CD8-positive, alpha-beta T cell (primary cell): ENCODE measurements at regions of chr13 and their contacts with region 1.

Region 1: GRCh38 chr13:42969558-42970172 is 22.4 kb downstream of the EPSTI1 start:
- DNase-seq: peak; percentile 65 to 90 (median 82)
- ATAC-seq: peak; percentile 92
- H3K4me3 ChIP-seq: no peak overlapping the region
- H3K4me3 Mint-ChIP-seq: no peak overlapping the region
- H3K27ac ChIP-seq: no peak overlapping the region
- H3K27ac Mint-ChIP-seq: peak overlapping the region; percentile 28
- H3K4me1 ChIP-seq: peaks cover 5% of the 10 kb centered on the region
- H3K4me1 Mint-ChIP-seq: peaks cover 17% of the 10 kb centered on the region
- H3K27me3 ChIP-seq: no peaks in the 10 kb centered on the region
- H3K27me3 Mint-ChIP-seq: no peaks in the 10 kb centered on the region
- CTCF ChIP-seq: peak; percentile 90

Region 2: DNA sequence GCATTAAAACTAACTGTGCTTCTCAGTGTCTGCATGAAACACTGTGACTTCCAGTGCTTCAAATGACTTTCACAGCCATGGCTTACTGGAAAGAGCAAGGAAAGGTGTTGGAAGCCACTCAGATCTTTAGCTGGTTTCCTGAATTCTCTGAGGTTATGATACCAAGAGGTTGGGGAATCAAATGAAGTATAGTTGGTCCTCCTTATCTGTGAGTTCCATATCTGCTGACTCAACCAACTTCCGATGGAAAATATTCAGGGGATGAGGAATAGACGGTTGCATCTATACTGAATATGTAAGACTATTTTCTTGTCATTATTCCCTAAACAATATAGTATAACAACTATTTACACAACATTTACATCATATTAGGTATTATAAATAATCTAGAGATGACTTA is 10.1 kb before region 1 on chr13:
- CTCF ChIA-PET with region 1: interaction called, 22 read pairs
- POLR2A ChIA-PET with region 1: no interaction called
- intact Hi-C with region 1: no loop called
- DNase-seq: no peak
- ATAC-seq: no peak
- H3K4me3 ChIP-seq: no peak overlapping the region
- H3K4me3 Mint-ChIP-seq: no peak overlapping the region
- H3K27ac ChIP-seq: no peak overlapping the region
- H3K27ac Mint-ChIP-seq: no peak overlapping the region
- H3K4me1 ChIP-seq: no peaks in the 10 kb centered on the region
- H3K4me1 Mint-ChIP-seq: no peaks in the 10 kb centered on the region
- H3K27me3 ChIP-seq: no peaks in the 10 kb centered on the region
- H3K27me3 Mint-ChIP-seq: no peaks in the 10 kb centered on the region
- CTCF ChIP-seq: no peak

Region 3: DNA sequence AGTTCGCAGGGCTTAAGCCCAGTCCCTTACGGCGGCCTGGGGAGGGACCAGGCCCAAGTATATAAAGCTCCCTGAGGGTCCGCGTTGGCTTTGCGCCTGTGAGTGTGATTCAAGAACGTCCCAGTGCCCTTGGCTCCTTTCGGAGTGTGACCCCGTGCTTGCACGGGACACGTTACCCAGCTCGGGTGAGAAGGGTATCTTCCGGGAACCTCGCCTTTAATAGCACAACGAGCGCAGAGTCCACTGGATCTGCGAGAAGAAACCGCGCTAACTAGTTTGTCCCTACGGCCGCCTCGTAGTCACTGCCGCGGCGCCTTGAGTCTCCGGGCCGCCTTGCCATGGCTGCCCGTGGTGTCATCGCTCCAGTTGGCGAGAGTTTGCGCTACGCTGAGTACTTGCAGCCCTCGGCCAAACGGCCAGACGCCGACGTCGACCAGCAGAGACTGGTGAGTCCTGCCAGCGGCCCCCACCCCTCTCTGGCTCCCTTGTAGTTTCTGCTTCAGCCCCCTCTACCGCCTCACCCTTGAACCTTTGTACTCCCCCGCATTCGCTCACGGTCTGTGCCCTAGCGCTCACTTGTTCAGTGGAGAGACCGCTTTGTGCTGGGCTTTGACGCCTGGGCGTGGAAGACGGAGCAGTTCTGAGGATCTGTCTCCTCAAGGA is 53.8 kb after region 1 on chr13 and contains the start of gene DNAJC15:
- CTCF ChIA-PET with region 1: interaction called, 8 read pairs
- POLR2A ChIA-PET with region 1: no interaction called
- intact Hi-C with region 1: loop called (anchors 1 kb)
- DNase-seq: peak; percentile 35 to 88 (median 80)
- ATAC-seq: peak; percentile 91
- H3K4me3 ChIP-seq: peak within 1 kb of the TSS; percentile 72 to 93
- H3K4me3 Mint-ChIP-seq: peak within 1 kb of the TSS; percentile 96
- H3K27ac ChIP-seq: peak within 1 kb of the TSS; percentile 64 to 81
- H3K27ac Mint-ChIP-seq: peak within 1 kb of the TSS; percentile 97
- H3K4me1 ChIP-seq: peaks cover 22% of the 10 kb centered on the region
- H3K4me1 Mint-ChIP-seq: peaks cover 34% of the 10 kb centered on the region
- H3K27me3 ChIP-seq: no peaks in the 10 kb centered on the region
- H3K27me3 Mint-ChIP-seq: no peaks in the 10 kb centered on the region
- CTCF ChIP-seq: no peak
- total RNA-seq, gene DNAJC15: 4.2 to 5.9 TPM

Region 4: DNA sequence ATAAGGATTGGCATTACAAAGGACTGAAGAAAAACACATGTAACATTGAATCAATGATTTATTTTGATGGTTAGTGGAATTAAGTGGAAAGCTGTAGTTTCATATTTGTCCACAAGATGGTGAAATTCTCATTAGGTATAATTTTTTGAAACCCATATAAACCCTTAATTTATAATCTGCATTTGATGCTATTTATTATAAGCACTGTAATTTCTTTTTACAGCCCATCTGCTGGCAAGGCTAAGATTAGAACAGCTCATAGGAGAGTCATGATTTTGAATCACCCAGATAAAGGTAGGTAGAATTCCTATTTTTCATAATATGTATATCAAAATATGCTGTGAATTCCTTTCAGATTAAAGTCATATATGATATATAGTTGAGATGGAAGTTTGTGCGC is 115.9 kb after region 1 on chr13:
- CTCF ChIA-PET with region 1: interaction called, 10 read pairs
- POLR2A ChIA-PET with region 1: no interaction called
- intact Hi-C with region 1: loop called (anchors 5 kb)
- DNase-seq: peak in 2 of 9 experiments; percentile 29 to 48
- ATAC-seq: no peak
- H3K4me3 ChIP-seq: no peak overlapping the region
- H3K4me3 Mint-ChIP-seq: no peak overlapping the region
- H3K27ac ChIP-seq: no peak overlapping the region
- H3K27ac Mint-ChIP-seq: no peak overlapping the region
- H3K4me1 ChIP-seq: no peaks in the 10 kb centered on the region
- H3K4me1 Mint-ChIP-seq: peaks cover 14% of the 10 kb centered on the region
- H3K27me3 ChIP-seq: no peaks in the 10 kb centered on the region
- H3K27me3 Mint-ChIP-seq: no peaks in the 10 kb centered on the region
- CTCF ChIP-seq: peak; percentile 83

Region 5: DNA sequence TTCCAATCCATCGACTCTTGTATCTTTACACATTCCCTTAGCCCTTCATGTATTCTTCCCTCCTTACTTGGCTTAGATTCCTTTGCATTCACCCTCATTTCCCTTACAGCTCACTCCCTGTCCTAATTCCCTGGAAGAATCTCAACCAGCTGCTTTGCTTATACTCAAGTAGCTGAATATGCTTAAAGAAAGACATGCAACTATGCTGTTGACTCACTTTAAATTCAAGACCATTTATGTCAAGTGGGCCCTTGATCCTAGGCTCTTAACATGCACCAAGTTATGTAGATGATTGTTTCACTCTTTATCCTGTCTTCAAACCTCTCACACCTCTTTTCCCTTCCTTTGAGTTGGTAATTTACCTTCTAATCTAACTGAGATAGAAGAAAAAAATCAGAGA is 902.5 kb after region 1 on chr13:
- CTCF ChIA-PET with region 1: interaction called, 5 read pairs
- POLR2A ChIA-PET with region 1: no interaction called
- intact Hi-C with region 1: loop called (anchors 1 to 2 kb)
- DNase-seq: no peak
- ATAC-seq: no peak
- H3K4me3 ChIP-seq: no peak overlapping the region
- H3K4me3 Mint-ChIP-seq: no peak overlapping the region
- H3K27ac ChIP-seq: no peak overlapping the region
- H3K27ac Mint-ChIP-seq: no peak overlapping the region
- H3K4me1 ChIP-seq: no peaks in the 10 kb centered on the region
- H3K4me1 Mint-ChIP-seq: no peaks in the 10 kb centered on the region
- H3K27me3 ChIP-seq: no peaks in the 10 kb centered on the region
- H3K27me3 Mint-ChIP-seq: no peaks in the 10 kb centered on the region
- CTCF ChIP-seq: no peak